Endothelial cell of umbilical vein (primary cell): ENCODE measurements at regions of chr6 and their contacts with region 1.

Region 1: GRCh38 chr6:146041282-146041681 is 12.4 kb downstream of the GRM1 start:
- DNase-seq: peak; percentile 40
- H3K4me3 ChIP-seq: no peak overlapping the region
- H3K27ac ChIP-seq: no peak overlapping the region
- H3K4me1 ChIP-seq: no peaks in the 10 kb centered on the region
- H3K27me3 ChIP-seq: no peaks in the 10 kb centered on the region
- CTCF ChIP-seq: peak; percentile 24 to 46
- POLR2A ChIP-seq: no peak

Region 2: GRCh38 chr6:145875496-145876211 is 165.6 kb before region 1 on chr6:
- CTCF ChIA-PET with region 1: no interaction called
- POLR2A ChIA-PET with region 1: no interaction called
- dilution Hi-C with region 1: no loop called
- intact Hi-C with region 1: no loop called
- DNase-seq: no peak
- H3K4me3 ChIP-seq: no peak overlapping the region
- H3K27ac ChIP-seq: no peak overlapping the region
- H3K4me1 ChIP-seq: peaks cover 4% of the 10 kb centered on the region
- H3K27me3 ChIP-seq: no peaks in the 10 kb centered on the region
- CTCF ChIP-seq: no peak
- POLR2A ChIP-seq: no peak

Region 3: GRCh38 chr6:146526192-146526591 is 484.9 kb after region 1 on chr6:
- CTCF ChIA-PET with region 1: interaction called, 22 read pairs
- POLR2A ChIA-PET with region 1: no interaction called
- dilution Hi-C with region 1: no loop called
- intact Hi-C with region 1: no loop called
- DNase-seq: peak; percentile 19
- H3K4me3 ChIP-seq: no peak overlapping the region
- H3K27ac ChIP-seq: no peak overlapping the region
- H3K4me1 ChIP-seq: no peaks in the 10 kb centered on the region
- H3K27me3 ChIP-seq: no peaks in the 10 kb centered on the region
- CTCF ChIP-seq: peak in 1 of 2 donors; percentile 15
- POLR2A ChIP-seq: no peak

Region 4: GRCh38 chr6:146785001-146785585 is 743.8 kb after region 1 on chr6:
- CTCF ChIA-PET with region 1: interaction called, 34 read pairs
- POLR2A ChIA-PET with region 1: no interaction called
- dilution Hi-C with region 1: no loop called
- intact Hi-C with region 1: loop called (anchors 1 kb)
- DNase-seq: peak; percentile 40
- H3K4me3 ChIP-seq: no peak overlapping the region
- H3K27ac ChIP-seq: no peak overlapping the region
- H3K4me1 ChIP-seq: no peaks in the 10 kb centered on the region
- H3K27me3 ChIP-seq: no peaks in the 10 kb centered on the region
- CTCF ChIP-seq: peak; percentile 42 to 48
- POLR2A ChIP-seq: no peak